Dendritic cell treated with granulocyte-macrophage colony-stimulating factor and Interleukin-4, amounts not matched to agents 40 ng/mL and 50 ng/mL, for 4 days (primary cell): ENCODE measurements at regions of chr2 and their contacts with region 1.

Region 1: DNA sequence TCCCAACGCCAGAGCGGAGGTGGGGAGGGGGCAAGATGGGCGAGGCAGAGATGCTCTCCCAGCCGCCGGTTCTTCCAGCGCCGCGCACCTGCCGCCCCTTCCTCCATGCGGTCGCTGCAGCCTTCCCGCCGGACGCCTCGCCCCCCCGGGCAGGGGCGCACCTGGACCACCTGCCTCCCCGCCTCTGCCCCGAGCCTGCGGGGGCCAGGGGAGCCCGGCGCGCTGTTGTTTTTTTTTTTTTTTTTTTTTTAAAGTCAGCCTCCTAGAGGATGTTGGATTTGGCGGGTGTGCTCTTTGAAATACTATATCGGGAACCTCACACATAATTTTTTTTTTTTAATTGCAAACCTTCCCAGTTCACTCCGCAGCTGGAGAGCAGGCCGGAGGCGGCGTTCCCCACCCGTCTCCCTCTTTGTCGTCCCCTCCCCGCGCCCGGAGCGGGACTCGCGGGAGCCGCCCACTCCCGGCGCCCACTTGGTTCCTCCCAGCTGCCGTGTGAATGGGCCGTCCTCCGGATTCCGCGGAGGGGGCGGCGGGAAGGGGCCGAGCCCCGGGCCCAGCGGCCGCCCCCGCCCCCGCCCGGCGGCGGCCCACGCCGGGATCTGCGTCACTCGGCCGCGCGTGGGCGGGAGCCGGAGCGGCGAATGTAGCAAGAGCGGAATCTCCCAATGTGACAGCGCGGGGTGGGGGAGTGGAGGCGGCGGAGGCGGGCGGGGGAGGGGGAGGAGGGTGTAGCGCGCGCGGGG is 421 bp upstream of the NAB1 start:
- H3K4me3 Mint-ChIP-seq: peak overlapping the region; percentile 82
- H3K27ac Mint-ChIP-seq: peak overlapping the region; percentile 96
- H3K4me1 Mint-ChIP-seq: peaks cover 32% of the 10 kb centered on the region
- H3K27me3 Mint-ChIP-seq: no peaks in the 10 kb centered on the region

Region 2: DNA sequence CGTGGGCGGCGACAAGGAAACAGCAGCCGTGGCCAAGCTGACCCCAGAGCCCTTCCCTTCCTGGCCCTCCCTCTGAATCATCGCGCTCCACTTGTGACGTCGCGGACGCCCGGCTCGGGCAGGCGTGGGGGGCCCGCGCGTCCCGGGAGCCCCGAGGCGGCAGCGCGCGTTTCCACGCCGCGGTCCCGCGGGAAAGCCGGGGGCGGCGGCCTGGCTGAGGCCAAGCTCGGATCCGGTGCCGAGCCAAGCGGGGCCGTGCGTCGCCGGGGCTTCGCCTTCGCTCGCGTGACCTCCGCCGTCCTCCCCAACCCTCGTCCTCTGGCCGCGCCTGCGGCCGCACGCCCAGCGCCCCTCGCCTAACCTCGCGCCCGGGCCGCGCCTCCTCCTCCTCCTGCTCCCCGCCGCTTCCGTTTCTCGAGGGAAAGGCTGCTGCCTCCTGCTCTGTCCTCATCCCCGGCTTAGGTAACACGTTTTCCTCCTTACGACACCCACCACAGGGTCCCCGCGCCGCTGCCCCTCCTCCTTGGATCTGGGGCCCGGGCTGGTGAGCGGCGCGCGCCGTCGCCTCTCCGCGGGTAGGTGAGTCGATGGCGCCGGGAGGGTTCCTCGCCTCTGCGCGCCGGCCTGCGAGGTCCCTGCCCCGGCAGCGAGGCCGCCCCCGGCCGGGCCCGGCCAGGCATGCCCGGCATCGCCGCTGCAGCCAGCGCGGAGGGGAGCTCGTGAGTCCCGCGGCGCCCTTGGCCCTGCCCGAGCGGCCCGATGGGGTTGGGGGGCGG is 304.8 kb before region 1 on chr2 and contains the start of gene INPP1:
- intact Hi-C with region 1: loop called (anchors 10 kb)
- H3K4me3 Mint-ChIP-seq: peak within 1 kb of the TSS; percentile 94
- H3K27ac Mint-ChIP-seq: peak within 1 kb of the TSS; percentile 92
- H3K4me1 Mint-ChIP-seq: peaks cover 24% of the 10 kb centered on the region
- H3K27me3 Mint-ChIP-seq: no peaks in the 10 kb centered on the region

Region 3: GRCh38 chr2:190408538-190409271 is 239.8 kb before region 1 on chr2:
- intact Hi-C with region 1: loop called (anchors 5 kb)
- H3K4me3 Mint-ChIP-seq: peak overlapping the region; percentile 73
- H3K27ac Mint-ChIP-seq: peak overlapping the region; percentile 80
- H3K4me1 Mint-ChIP-seq: peaks cover 29% of the 10 kb centered on the region
- H3K27me3 Mint-ChIP-seq: peaks cover 2% of the 10 kb centered on the region

Region 4: DNA sequence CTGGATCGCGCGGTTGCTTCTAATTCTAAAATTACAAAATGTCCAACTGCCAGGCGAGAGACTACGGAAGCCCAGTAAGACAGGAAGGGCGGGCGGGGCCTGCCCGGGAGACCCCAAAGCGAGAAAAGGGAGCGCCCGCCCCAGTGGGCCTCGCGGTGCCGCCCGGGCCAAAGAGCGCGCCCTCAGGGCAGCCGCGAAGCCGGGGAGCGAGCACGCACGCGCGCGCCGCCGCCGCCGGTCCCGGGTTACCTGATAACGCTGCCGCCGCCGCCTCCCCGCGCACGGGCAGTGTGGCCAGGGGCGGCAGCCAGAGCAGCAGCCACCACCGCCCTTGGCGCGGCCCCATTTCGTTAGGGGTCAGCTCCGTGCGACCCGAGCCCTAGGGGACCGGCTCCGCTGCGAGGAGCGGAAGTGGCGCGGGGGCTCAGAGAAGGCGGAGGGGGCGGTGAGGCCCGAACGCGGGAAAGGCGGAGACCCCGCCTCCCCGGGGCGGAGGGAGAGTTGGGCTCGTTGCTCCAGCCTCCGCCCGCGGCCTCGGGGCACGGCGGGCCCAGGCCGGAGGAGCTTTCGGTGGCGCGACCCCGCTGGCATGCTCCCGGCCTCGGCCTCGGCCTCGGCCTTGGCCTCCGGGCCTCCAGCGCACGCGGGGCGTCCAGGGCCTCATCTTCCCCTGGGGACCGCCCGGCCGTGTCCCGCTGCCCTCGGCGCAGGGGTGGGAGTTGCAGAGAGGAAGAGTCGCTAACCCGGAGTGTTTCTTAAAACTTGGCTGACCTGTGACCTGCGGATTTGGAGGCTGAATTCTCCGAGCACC is 113.9 kb before region 1 on chr2 and contains the start of gene NEMP2:
- intact Hi-C with region 1: loop called (anchors 5 kb)
- H3K4me3 Mint-ChIP-seq: peak within 1 kb of the TSS; percentile 83
- H3K27ac Mint-ChIP-seq: peak within 1 kb of the TSS; percentile 91
- H3K4me1 Mint-ChIP-seq: peaks cover 21% of the 10 kb centered on the region
- H3K27me3 Mint-ChIP-seq: no peaks in the 10 kb centered on the region

Region 5: DNA sequence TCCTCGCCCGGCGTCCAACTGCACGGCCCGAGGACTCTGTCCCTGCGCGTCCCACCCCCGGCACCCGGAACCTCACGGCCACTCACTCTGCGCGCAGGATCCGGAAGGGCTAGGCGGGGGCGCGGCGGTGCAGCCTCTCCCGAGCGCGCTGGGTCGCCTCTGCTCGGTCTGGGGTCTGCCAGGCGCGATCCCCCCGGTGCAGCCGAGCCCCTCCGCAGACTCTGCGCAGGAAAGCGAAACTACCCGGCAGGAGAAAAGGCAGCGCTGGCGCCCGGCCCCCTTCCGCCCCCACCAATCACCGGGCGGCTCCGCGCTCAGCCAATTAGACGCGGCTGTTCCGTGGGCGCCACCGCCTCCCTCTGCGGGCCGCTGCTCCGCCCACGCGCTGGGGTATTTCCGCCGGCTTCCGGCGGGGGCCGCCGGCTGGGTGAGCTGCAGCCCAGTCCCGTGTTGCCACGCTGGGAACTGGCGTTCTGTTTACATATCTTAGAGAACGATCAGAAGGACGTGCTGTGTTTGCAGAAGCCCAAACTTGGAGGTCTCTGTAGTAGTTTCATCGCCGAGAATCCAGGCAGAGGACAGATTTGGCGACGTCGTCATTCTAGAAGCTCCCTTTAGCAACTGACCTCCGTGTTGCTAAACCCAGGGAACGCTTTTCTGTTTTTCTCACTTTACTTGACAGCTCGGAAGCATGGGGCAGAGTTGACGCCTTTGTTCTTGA is 365.6 kb after region 1 on chr2 and contains the start of gene STAT1:
- intact Hi-C with region 1: loop called (anchors 10 kb)
- H3K4me3 Mint-ChIP-seq: no peak within 1 kb of the TSS
- H3K27ac Mint-ChIP-seq: no peak within 1 kb of the TSS
- H3K4me1 Mint-ChIP-seq: peaks cover 18% of the 10 kb centered on the region
- H3K27me3 Mint-ChIP-seq: no peaks in the 10 kb centered on the region